ENCODE measurements at regions of chr3 and their contacts with region 1.

Region 1: GRCh38 chr3:69116897-69117296 is 5.5 kb downstream of the LMOD3 start:
- DNase-seq: peak in 9 of 10 donors; percentile 49 to 87 (median 71)
- H3K4me3 ChIP-seq: peak overlapping the region in 12 of 59 donors; percentile 2 to 32 (median 16)
- H3K27ac ChIP-seq: peak overlapping the region; percentile 34 to 97 (median 86)
- H3K27me3 ChIP-seq: no peaks in the 10 kb centered on the region
- CTCF ChIP-seq: peak in 2 of 56 donors; percentile 14 to 22

Region 2: GRCh38 chr3:69084326-69085167 is 32.4 kb before region 1 on chr3 and contains the start of gene ARL6IP5:
- intact Hi-C with region 1: loop called (anchors 1 to 2 kb)
- DNase-seq: peak; percentile 93 to 98 (median 96)
- H3K4me3 ChIP-seq: peak within 1 kb of the TSS; percentile 60 to 99 (median 92)
- H3K27ac ChIP-seq: peak within 1 kb of the TSS; percentile 85 to 99 (median 98)
- H3K27me3 ChIP-seq: no peaks in the 10 kb centered on the region
- CTCF ChIP-seq: peak in 6 of 56 donors; percentile 4 to 32 (median 13)
- total RNA-seq, gene ARL6IP5: 51.3 to 182 (median 139) TPM